SK-N-SH (cell line): ENCODE measurements at regions of chr7 and their contacts with region 1.

Region 1: GRCh38 chr7:88339994-88340393 is 33.3 kb upstream of the STEAP4 start:
- DNase-seq: no peak
- H3K4me3 ChIP-seq: no peak overlapping the region
- H3K27ac ChIP-seq: no peak overlapping the region
- H3K4me1 ChIP-seq: peaks cover 0 to 5% of the 10 kb centered on the region in 2 experiments; a peak in 1 of 4 replicates
- H3K27me3 ChIP-seq: no peaks in the 10 kb centered on the region; the same call in 1 of the 2 replicates
- CTCF ChIP-seq: no peak
- EP300 ChIP-seq: no peak
- RAD21 ChIP-seq: no peak

Region 2: DNA sequence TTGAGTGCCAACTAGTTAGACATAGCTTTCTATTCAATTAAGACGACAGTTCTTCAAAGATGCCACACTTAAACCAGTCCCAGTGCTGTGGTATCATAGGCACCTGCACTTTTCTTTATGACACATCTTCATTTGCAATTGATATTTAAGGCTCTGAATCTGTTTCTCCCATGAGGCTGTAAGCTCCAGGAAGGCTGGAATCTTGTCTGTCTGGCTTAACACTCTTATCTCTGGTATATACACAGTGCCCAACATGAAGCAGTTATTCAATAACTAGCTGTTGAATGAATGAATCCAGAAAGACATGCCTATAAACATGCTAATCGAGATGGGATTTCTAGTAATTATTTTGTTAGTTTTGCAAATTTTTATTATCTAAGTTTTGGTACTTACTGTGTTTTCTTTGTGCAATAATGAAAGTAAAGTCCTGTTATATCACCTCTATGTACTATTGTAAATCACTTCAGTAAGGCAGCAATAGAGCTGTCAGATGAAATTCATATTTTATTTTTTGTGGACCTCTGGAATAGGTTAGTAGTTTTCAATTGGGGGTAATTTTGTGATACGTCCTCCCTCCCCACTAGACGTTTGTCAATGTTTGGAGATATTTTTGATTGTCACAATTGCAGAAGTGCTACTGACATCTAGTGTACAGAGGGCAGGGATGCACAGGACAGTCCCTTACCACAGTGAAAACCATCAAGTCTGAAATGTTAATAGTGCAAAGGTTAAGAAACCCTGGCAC is 18.0 kb after region 1 on chr7:
- CTCF ChIA-PET with region 1: interaction called, 66 read pairs
- POLR2A ChIA-PET with region 1: no interaction called
- DNase-seq: peak; percentile 9
- H3K4me3 ChIP-seq: peak overlapping the region; percentile 16 to 19; a peak in 2 of 4 replicates
- H3K27ac ChIP-seq: no peak overlapping the region
- H3K4me1 ChIP-seq: no peaks in the 10 kb centered on the region; a peak in 2 of 4 replicates
- H3K27me3 ChIP-seq: no peaks in the 10 kb centered on the region
- CTCF ChIP-seq: peak; percentile 60
- EP300 ChIP-seq: no peak
- RAD21 ChIP-seq: peak; percentile 75